ENCODE measurements at regions of chr1 and their contacts with region 1.

Region 1: DNA sequence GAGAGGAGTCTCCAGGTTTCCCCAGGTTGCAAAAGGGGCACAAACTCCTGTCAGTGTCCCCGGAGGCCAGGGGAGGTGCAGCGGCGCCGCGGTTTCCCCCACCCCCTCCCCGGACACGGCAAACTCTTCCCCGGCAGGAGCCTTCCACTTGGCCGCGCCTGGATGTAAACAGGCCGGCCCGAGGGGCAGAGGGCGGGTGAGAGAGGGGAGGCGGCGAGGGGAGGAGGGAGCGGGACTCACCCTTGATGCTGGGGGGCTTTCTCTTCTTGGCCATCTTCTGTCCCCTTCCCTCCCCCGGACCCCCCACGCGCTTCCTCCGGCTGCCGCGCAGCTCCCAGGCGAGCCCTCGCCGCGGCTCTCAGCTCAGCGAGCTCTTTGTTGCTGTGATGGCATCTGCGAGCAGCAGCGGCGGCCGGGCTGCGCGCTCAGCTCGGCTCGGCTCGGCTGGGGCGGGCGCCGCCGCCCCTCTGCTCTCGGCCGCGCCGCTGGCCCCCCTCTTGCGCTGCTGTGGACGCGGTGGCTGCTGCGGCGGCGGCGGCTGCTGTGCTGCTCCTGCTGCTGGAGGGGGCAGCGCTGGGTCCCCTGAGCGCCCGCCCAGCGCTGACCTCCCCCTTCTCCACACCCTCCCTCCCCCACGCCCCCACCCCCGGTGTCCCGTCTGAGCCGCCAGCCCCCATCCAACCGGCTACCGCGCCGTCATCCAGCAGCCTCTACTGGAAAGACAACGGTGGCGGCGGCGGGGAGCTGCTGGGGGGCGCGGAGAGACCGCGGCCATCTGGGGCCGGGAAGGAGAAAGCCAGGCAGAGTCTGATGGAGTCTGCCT is 4.9 kb upstream of the SLC44A5 start:
- DNase-seq: peak in 1 of 2 experiments; percentile 73
- H3K4me3 ChIP-seq: peak overlapping the region; percentile 70 to 80 (median 80)
- H3K27ac ChIP-seq: no peak overlapping the region
- H3K4me1 ChIP-seq: peaks cover 0 to 9% (median 0%) of the 10 kb centered on the region in 4 experiments; a peak in 2 of 7 replicates
- H3K27me3 ChIP-seq: peaks cover 0 to 46% (median 32%) of the 10 kb centered on the region in 4 experiments; a peak in 6 of 7 replicates
- CTCF ChIP-seq: no peak
- EP300 ChIP-seq: no peak; a peak in 1 of 3 replicates
- POLR2A ChIP-seq: no peak
- RAD21 ChIP-seq: no peak

Region 2: DNA sequence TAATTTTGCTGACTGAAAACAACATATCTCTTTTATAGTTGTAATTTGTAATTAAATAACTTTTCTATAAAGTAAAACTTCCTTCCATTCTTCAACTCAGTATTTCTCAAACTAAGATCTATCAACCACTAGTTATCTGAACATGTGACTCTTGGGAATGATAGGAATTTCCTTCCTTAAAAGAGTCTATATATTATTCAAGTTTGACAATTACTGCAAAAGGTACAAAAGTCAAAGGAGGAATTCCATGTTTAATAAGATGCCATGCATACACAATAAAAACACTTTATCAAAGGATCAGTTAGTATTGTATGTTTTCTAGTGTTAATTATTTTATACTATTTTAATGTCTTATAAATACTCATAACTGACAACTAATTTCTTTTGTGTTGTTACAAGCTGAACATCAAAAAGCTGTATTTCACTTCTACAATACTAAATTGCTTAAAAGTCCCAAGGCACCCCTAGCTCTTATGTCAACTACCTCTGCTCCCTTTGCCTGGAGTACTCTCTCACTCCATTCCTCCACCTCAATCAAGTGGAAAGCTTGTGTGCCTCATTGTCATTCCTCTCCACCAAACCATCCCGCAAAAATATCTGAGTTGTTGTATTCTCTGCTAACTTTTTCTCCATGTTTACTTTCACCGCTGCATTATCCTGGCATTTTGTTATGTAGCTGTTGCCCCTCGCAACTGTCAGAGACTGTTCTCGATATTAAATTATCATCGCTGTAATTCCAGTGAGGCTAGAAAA is 72.8 kb before region 1 on chr1:
- CTCF ChIA-PET with region 1: no interaction called
- POLR2A ChIA-PET with region 1: no interaction called
- DNase-seq: no peak
- H3K4me3 ChIP-seq: no peak overlapping the region
- H3K27ac ChIP-seq: no peak overlapping the region
- H3K4me1 ChIP-seq: no peaks in the 10 kb centered on the region
- H3K27me3 ChIP-seq: no peaks in the 10 kb centered on the region
- CTCF ChIP-seq: no peak
- EP300 ChIP-seq: no peak
- POLR2A ChIP-seq: no peak
- RAD21 ChIP-seq: no peak

Region 3: GRCh38 chr1:75588779-75589475 is 26.9 kb before region 1 on chr1:
- CTCF ChIA-PET with region 1: interaction called, 15 read pairs
- POLR2A ChIA-PET with region 1: no interaction called
- DNase-seq: no peak
- H3K4me3 ChIP-seq: no peak overlapping the region
- H3K27ac ChIP-seq: no peak overlapping the region
- H3K4me1 ChIP-seq: peaks cover 0 to 2% (median 0%) of the 10 kb centered on the region in 4 experiments; a peak in 1 of 7 replicates
- H3K27me3 ChIP-seq: no peaks in the 10 kb centered on the region
- CTCF ChIP-seq: no peak
- EP300 ChIP-seq: no peak
- POLR2A ChIP-seq: no peak
- RAD21 ChIP-seq: no peak

Region 4: DNA sequence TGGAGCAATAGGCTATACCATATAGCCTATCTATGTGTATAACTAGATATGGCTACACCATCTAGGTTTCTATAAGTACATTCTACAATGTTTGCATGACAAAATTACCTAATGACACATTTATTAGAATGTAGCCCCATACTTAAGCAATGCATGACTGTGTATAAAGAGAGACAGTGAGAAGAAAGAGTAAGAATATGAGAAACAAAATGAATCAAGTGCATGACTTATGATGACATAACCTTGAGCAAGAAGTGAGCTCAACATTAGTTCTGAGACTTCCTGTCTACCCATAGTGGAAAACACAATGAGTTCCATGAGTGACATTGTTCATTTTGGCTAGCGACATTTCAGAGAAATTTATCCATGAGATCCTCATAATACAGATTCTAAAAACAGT is 15.0 kb before region 1 on chr1:
- CTCF ChIA-PET with region 1: interaction called, 22 read pairs
- POLR2A ChIA-PET with region 1: no interaction called
- DNase-seq: no peak
- H3K4me3 ChIP-seq: no peak overlapping the region
- H3K27ac ChIP-seq: no peak overlapping the region
- H3K4me1 ChIP-seq: no peaks in the 10 kb centered on the region
- H3K27me3 ChIP-seq: no peaks in the 10 kb centered on the region
- CTCF ChIP-seq: no peak
- EP300 ChIP-seq: no peak
- POLR2A ChIP-seq: no peak
- RAD21 ChIP-seq: no peak

Region 5: GRCh38 chr1:75632350-75632949 is 16.6 kb after region 1 on chr1:
- CTCF ChIA-PET with region 1: interaction called, 94 read pairs
- POLR2A ChIA-PET with region 1: interaction called, 22 read pairs
- DNase-seq: no peak
- H3K4me3 ChIP-seq: no peak overlapping the region
- H3K27ac ChIP-seq: no peak overlapping the region
- H3K4me1 ChIP-seq: peaks cover 0 to 6% (median under 1%) of the 10 kb centered on the region in 4 experiments; a peak in 4 of 7 replicates
- H3K27me3 ChIP-seq: peaks cover 0 to 1% (median 0%) of the 10 kb centered on the region in 4 experiments; a peak in 1 of 7 replicates
- CTCF ChIP-seq: peak in 2 of 3 experiments; percentile 49 to 61; a peak in 2 of 4 replicates
- EP300 ChIP-seq: no peak
- POLR2A ChIP-seq: no peak
- RAD21 ChIP-seq: peak; percentile 76 to 78